HEK293T (cell line): ENCODE measurements at regions of chr2 and their contacts with region 1.

Region 1: GRCh38 chr2:174771631-174772471 is 7.6 kb upstream of the CHRNA1 start:
- DNase-seq: peak; percentile 83

Region 2: GRCh38 chr2:174561283-174561971 is 210.4 kb before region 1 on chr2:
- CTCF ChIA-PET with region 1: no interaction called
- POLR2A ChIA-PET with region 1: no interaction called
- DNase-seq: no peak

Region 3: GRCh38 chr2:174985630-174986029 is 213.8 kb after region 1 on chr2:
- CTCF ChIA-PET with region 1: interaction called, 35 read pairs
- POLR2A ChIA-PET with region 1: no interaction called
- DNase-seq: no peak

Region 4: GRCh38 chr2:174992886-174993285 is 221.0 kb after region 1 on chr2:
- CTCF ChIA-PET with region 1: interaction called, 32 read pairs
- POLR2A ChIA-PET with region 1: no interaction called
- DNase-seq: no peak

Region 5: DNA sequence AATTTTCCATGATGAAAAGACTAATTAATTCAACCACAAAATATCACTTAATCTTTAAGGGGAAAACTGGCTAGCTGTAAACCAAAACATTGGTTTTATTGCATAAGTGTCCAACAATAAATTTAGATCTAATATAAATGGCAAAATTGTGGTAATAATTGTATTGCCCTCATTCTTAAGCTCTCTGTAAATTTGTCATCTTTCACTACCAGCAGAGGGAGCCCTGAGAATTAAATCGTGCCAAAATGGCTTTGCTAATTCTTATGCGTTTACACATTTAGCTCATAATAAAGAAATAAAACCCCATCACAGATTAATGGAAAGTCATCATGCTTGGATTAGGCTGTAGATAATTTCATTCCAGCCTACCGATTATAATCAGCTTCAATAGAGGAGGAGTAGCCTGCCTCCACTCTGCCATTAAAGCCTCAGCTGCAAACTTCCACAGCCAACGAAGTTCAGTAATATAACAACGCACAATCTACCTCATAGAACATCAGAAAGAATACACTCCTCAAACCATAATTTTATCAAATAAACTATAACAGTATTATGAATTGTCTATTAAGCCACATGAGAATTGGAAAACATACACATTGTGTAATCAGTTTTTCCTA is 479.7 kb after region 1 on chr2:
- CTCF ChIA-PET with region 1: no interaction called
- POLR2A ChIA-PET with region 1: no interaction called
- DNase-seq: peak; percentile 25